ENCODE measurements at regions of chr1 and their contacts with region 1.

Region 1: GRCh38 chr1:209989525-209989924 is 51.5 kb downstream of the SYT14 start:
- DNase-seq: peak; percentile 52

Region 2: DNA sequence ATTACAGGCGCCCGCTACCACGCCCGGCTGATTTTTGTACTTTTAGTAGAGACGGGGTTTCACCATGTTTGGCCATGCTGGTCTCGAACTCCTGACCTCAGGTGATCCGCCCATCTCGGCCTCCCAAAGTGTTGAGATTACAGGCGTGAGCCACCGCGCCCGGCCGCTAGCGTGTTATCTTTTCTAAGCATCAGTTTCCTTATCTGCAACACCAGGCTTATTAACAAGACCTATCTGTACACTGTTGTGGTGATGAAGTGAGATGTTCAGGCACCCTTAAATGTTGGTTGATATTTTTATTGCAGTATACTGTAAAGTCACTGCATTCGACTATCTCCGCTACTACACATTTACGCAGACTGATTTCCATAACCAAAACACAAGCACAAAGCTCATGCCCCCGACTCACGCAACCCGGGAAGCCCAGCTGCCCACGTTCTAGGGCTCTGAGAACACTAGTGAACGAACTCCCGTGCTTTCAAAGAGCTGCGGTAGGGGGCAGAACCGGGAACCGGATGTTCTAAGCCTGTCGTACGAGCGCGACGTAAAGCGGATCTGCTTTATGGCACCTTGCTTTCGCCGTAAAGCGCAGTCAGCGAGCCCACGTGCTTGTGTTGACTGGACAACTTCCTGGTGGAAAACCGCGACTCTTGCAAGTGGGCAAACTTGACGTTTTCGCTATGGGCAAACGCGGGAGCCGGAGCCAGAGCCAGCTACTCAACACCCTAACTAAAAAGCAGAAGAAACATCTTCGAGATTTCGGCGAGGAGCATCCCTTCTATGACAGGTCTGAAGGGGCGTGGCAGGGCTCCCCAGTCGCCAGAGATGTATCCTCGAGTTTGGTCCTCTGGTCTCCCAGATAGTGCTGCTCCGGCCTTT is 161.9 kb before region 1 on chr1 and contains the start of gene UTP25:
- in situ Hi-C with region 1: loop called (anchors 25 kb)
- DNase-seq: peak; percentile 97
- total RNA-seq, gene UTP25: 17.0 and 18.0 TPM in 2 replicates

Region 3: GRCh38 chr1:209870151-209870831 is 119.2 kb before region 1 on chr1:
- in situ Hi-C with region 1: no loop called
- DNase-seq: peak; percentile 58

Region 4: GRCh38 chr1:210099921-210100320 is 110.4 kb after region 1 on chr1:
- in situ Hi-C with region 1: no loop called
- DNase-seq: no peak